ENCODE measurements at regions of chr10 and their contacts with region 1.

Region 1: DNA sequence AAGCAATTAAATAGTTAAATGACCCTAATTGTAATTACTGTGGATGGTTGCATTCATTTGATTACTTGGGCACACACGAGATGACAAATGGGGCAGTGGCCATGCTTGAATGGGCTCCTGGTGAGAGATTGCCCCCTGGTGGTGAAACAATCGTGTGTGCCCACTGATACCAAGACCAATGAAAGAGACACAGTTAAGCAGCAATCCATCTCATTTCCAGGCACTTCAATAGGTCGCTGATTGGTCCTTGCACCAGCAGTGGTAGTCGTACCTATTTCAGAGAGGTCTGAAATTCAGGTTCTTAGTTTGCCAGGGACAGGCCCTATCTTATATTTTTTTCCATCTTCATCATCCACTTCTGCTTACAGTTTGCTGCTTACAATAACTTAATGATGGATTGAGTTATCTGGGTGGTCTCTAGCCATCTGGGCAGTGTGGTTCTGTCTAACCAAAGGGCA is 8.3 kb downstream of the PCBD1 start:
- DNase-seq: peak; percentile 61
- ATAC-seq: peak; percentile 96
- H3K4me3 ChIP-seq: no peak overlapping the region
- H3K27ac ChIP-seq: no peak overlapping the region
- H3K4me1 ChIP-seq: no peaks in the 10 kb centered on the region
- H3K27me3 ChIP-seq: no peaks in the 10 kb centered on the region
- CTCF ChIP-seq: peak; percentile 97

Region 2: GRCh38 chr10:70549962-70550458 is 330.1 kb before region 1 on chr10:
- CTCF ChIA-PET with region 1: no interaction called
- POLR2A ChIA-PET with region 1: no interaction called
- in situ Hi-C with region 1: no loop called
- intact Hi-C with region 1: loop called (anchors 2 kb)
- DNase-seq: peak; percentile 46
- ATAC-seq: peak; percentile 92
- H3K4me3 ChIP-seq: no peak overlapping the region
- H3K27ac ChIP-seq: no peak overlapping the region
- H3K4me1 ChIP-seq: no peaks in the 10 kb centered on the region
- H3K27me3 ChIP-seq: no peaks in the 10 kb centered on the region
- CTCF ChIP-seq: peak; percentile 97

Region 3: GRCh38 chr10:70758757-70759514 is 121.2 kb before region 1 on chr10:
- CTCF ChIA-PET with region 1: interaction called, 3 read pairs
- POLR2A ChIA-PET with region 1: no interaction called
- in situ Hi-C with region 1: no loop called
- intact Hi-C with region 1: loop called (anchors 5 kb)
- DNase-seq: peak; percentile 48
- ATAC-seq: peak; percentile 78
- H3K4me3 ChIP-seq: no peak overlapping the region
- H3K27ac ChIP-seq: peak overlapping the region; percentile 40; the same call in 1 of the 2 replicates
- H3K4me1 ChIP-seq: no peaks in the 10 kb centered on the region
- H3K27me3 ChIP-seq: no peaks in the 10 kb centered on the region
- CTCF ChIP-seq: peak; percentile 89

Region 4: GRCh38 chr10:70846795-70847194 is 33.3 kb before region 1 on chr10:
- CTCF ChIA-PET with region 1: interaction called, 10 read pairs
- POLR2A ChIA-PET with region 1: no interaction called
- in situ Hi-C with region 1: no loop called
- intact Hi-C with region 1: no loop called
- DNase-seq: no peak
- ATAC-seq: no peak
- H3K4me3 ChIP-seq: no peak overlapping the region
- H3K27ac ChIP-seq: no peak overlapping the region
- H3K4me1 ChIP-seq: peaks cover 17% of the 10 kb centered on the region
- H3K27me3 ChIP-seq: no peaks in the 10 kb centered on the region
- CTCF ChIP-seq: no peak

Measured in Panc1 (cell line).